ENCODE measurements at regions of chr18 and their contacts with region 1.

Region 1: GRCh38 chr18:62651276-62652056 is 63.9 kb upstream of the PHLPP1 start:
- DNase-seq: no peak

Region 2: DNA sequence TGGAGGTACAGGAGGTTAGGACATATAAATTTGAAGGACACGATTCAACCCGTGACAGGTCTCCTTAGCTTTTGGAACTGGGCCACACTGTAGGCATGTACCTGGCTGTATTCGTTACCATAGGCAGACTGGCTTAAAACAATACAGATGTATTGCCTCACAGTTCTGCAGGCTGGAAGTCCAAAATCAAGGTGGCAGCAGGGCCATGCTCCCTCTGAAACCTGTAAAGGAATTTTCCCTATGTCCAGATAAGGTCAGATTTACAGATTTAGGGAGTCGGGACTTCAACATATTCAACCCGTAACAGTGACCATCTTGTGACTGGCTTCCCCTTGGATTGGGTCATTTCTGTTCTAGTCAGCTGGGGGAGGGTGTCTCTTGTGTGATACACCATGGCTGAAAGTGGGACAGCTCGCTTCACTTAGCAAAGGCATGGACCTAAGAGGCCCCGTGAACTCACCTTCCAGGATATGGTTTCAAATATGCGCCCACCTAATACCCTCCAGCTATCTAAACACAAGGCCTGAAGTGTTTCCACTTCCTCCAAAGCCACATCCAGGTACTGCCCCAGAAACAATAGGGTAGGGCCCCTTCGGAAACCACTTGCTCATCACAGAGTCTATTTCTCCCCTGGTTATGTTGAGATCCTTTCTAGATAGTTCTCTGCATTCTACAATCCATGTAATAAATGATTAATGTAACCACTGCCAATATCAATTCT is 43.6 kb before region 1 on chr18:
- intact Hi-C with region 1: loop called in 1 of 2 experiments (anchors 1 kb)
- DNase-seq: no peak

Measured in posterior vena cava (tissue), 2 donors.